ENCODE measurements at regions of chr20 and their contacts with region 1.

Region 1: DNA sequence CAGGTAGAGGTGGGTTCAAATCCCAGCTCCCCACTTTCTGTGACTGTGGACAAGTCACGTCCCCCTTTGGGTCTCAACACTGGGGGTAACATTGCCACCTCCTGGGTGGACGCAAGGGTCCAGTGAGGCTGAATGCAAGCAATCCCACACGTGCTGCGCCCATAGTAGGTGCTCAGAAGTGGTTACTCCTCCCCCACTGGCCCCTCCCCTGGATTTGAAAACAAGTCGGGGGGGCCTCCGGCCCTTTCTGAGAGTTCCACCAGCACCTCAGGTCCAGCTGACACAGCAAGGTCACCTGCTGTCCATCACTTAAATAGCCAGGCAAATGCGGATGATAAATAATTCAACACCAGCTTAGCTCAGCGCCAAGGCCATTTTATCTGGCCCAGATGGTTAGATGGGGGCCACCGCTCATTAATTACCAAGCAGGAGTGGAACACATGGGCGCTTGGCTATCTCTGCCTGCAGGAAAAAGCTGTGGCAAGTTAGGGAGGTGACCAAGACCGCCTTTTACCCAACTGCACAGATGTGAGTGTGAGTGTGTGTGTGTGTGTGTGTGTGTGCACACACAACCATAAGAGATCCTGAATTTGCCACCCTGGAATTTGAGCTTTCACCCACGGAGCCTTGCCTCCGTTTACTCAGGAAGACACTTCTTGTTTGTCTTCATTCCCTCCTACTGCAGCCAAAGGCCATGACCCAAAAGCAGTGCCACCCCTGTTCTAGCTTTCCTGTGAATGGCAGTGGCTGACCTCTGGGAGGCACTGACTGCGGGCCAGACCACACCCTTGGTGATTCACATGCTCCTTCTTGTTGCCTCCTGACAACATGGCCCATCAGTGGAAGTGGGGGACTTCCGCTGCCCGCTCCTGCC is 34.7 kb upstream of the KCNB1 start:
- DNase-seq: no peak
- ATAC-seq: no peak
- H3K4me3 Mint-ChIP-seq: no peak overlapping the region
- H3K27ac Mint-ChIP-seq: no peak overlapping the region
- H3K4me1 Mint-ChIP-seq: peaks cover 10% of the 10 kb centered on the region
- H3K27me3 Mint-ChIP-seq: no peaks in the 10 kb centered on the region
- CTCF ChIP-seq: no peak

Region 2: GRCh38 chr20:49477200-49477599 is 40.0 kb before region 1 on chr20:
- CTCF ChIA-PET with region 1: no interaction called
- POLR2A ChIA-PET with region 1: no interaction called
- DNase-seq: no peak
- ATAC-seq: peak; percentile 58
- H3K4me3 Mint-ChIP-seq: no peak overlapping the region
- H3K27ac Mint-ChIP-seq: no peak overlapping the region
- H3K4me1 Mint-ChIP-seq: no peaks in the 10 kb centered on the region; the same call in 1 of the 2 replicates
- H3K27me3 Mint-ChIP-seq: peaks cover 14% of the 10 kb centered on the region
- CTCF ChIP-seq: no peak

Region 3: DNA sequence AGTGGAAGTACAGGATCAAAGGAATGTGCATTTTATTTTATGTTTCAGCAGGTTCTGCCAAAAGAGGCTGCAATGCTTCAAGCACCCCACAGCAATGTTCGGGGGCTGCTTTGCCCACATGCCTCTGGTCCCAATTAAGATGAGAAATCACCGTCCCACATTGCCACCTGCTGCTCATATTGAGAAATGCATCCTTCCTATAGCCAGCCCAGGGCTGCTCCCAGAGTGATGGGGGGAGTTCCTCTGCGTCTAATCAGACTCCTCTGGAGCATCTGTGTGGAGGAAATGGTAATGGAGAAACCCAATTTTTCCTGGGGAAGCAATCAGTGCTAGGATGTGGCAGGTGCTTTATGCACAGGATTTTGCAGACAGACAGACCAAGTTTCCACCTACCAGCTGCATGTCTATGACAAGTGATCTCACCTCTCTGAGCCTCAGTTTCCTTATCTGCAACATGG is 17.1 kb after region 1 on chr20:
- CTCF ChIA-PET with region 1: interaction called, 10 read pairs
- POLR2A ChIA-PET with region 1: no interaction called
- DNase-seq: peak; percentile 76
- ATAC-seq: peak; percentile 90
- H3K4me3 Mint-ChIP-seq: no peak overlapping the region
- H3K27ac Mint-ChIP-seq: no peak overlapping the region
- H3K4me1 Mint-ChIP-seq: no peaks in the 10 kb centered on the region
- H3K27me3 Mint-ChIP-seq: no peaks in the 10 kb centered on the region
- CTCF ChIP-seq: peak; percentile 81

Region 4: DNA sequence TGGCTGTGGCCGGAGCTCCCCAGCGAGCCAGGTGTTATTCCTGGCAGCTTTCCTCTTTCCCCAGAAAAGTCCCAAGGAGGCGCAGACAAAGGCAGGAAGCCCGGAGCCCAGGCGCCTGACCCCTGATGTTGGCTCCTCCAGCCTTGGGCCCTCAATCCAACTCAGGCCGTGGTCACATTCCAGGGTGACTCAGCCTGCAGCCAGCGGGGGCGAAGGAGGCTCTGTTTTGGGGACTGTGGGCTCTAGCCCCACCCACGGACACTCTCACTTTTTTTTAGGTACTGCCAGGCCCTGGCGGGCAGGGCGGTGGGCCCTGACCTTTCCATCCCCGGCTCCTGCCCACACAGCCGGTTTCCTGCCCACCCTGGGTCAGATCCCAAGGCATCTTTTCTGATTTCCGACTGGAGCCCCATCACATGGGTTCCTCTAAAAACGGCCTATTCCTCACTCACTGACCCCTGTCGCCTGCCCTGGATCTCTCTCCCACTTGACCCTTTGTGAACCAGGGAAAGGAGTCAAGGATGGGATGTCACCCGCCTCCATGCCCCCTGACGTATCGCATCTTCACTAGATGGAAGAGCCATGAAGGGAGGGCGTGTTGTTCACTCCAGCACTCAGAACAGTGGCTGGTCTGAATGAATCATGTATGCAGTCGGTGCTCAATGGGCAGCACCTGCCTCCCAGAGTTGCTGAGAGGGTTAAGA is 45.3 kb after region 1 on chr20:
- CTCF ChIA-PET with region 1: no interaction called
- POLR2A ChIA-PET with region 1: no interaction called
- DNase-seq: peak; percentile 55
- ATAC-seq: peak; percentile 88
- H3K4me3 Mint-ChIP-seq: no peak overlapping the region
- H3K27ac Mint-ChIP-seq: peak overlapping the region; percentile 95
- H3K4me1 Mint-ChIP-seq: peaks cover 38% of the 10 kb centered on the region
- H3K27me3 Mint-ChIP-seq: no peaks in the 10 kb centered on the region
- CTCF ChIP-seq: no peak

Measured in WTC11 (cell line).